CD4-positive, alpha-beta memory T cell (primary cell): ENCODE measurements at regions of chr1 and their contacts with region 1.

Region 1: GRCh38 chr1:101309334-101310311 is 72.8 kb downstream of the S1PR1 start:
- DNase-seq: peak; percentile 86 to 92 (median 89)
- H3K4me3 ChIP-seq: peak overlapping the region; percentile 9 to 55
- H3K4me3 Mint-ChIP-seq: peak overlapping the region; percentile 80 to 88 (median 86)
- H3K27ac ChIP-seq: peak overlapping the region; percentile 79
- H3K27ac Mint-ChIP-seq: peak overlapping the region; percentile 97 to 99 (median 98)
- H3K4me1 ChIP-seq: peaks cover 56% of the 10 kb centered on the region
- H3K4me1 Mint-ChIP-seq: peaks cover 50 to 78% (median 63%) of the 10 kb centered on the region in 4 donors
- H3K27me3 ChIP-seq: no peaks in the 10 kb centered on the region
- H3K27me3 Mint-ChIP-seq: no peaks in the 10 kb centered on the region

Region 2: GRCh38 chr1:100895540-100896483 is 413.8 kb before region 1 on chr1 and contains the start of gene SLC30A7:
- CTCF ChIA-PET with region 1: interaction called, 10 read pairs
- POLR2A ChIA-PET with region 1: interaction called, 14 read pairs
- intact Hi-C with region 1: no loop called
- DNase-seq: peak; percentile 93 to 98 (median 95)
- H3K4me3 ChIP-seq: peak within 1 kb of the TSS; percentile 96 to 98
- H3K4me3 Mint-ChIP-seq: peak within 1 kb of the TSS; percentile 94 to 100 (median 100)
- H3K27ac ChIP-seq: peak within 1 kb of the TSS; percentile 100
- H3K27ac Mint-ChIP-seq: peak within 1 kb of the TSS; percentile 99 to 100 (median 100)
- H3K4me1 ChIP-seq: peaks cover 44% of the 10 kb centered on the region
- H3K4me1 Mint-ChIP-seq: peaks cover 28 to 60% (median 39%) of the 10 kb centered on the region in 4 donors
- H3K27me3 ChIP-seq: no peaks in the 10 kb centered on the region
- H3K27me3 Mint-ChIP-seq: no peaks in the 10 kb centered on the region
- total RNA-seq, gene SLC30A7: 54.9 TPM

Region 3: GRCh38 chr1:100928128-100928527 is 381.5 kb before region 1 on chr1:
- CTCF ChIA-PET with region 1: interaction called, 10 read pairs
- POLR2A ChIA-PET with region 1: interaction called, 19 read pairs
- intact Hi-C with region 1: no loop called
- DNase-seq: no peak
- H3K4me3 ChIP-seq: peak overlapping the region in 1 of 2 donors; percentile 39
- H3K4me3 Mint-ChIP-seq: no peak overlapping the region
- H3K27ac ChIP-seq: peak overlapping the region; percentile 50
- H3K27ac Mint-ChIP-seq: no peak overlapping the region
- H3K4me1 ChIP-seq: peaks cover 95% of the 10 kb centered on the region
- H3K4me1 Mint-ChIP-seq: peaks cover 38 to 64% (median 49%) of the 10 kb centered on the region in 4 donors
- H3K27me3 ChIP-seq: no peaks in the 10 kb centered on the region
- H3K27me3 Mint-ChIP-seq: no peaks in the 10 kb centered on the region

Region 4: DNA sequence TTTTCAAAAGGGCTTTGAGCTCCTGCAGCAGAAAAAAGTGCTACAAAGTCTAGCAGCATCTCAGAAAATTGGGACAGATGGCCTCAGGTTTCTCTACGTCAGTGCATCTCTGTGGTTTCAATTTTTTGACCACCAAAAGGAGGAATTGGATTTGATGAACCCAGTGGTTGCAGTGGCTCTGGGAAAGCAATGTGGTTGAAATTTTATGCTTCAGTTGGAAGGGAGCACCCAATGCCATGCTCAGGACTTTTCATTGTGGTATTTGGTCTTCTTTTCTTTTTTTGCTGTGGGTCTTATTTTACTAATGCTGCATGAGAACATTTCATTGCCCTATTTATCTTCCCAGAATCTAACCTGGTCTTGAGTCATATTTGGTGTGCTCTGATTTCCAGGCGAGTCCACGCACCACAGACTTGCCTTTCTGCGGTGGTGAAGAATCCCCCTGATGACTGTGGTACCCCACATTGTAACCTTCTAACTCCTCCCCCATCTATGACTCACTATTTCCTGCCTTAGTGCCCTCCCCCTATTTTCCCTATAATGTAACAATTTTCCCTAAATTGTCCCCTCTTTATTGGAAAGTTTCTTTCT is 16.1 kb before region 1 on chr1:
- CTCF ChIA-PET with region 1: interaction called, 180 read pairs
- POLR2A ChIA-PET with region 1: interaction called, 45 read pairs
- intact Hi-C with region 1: loop called (anchors 1 kb)
- DNase-seq: peak in 2 of 5 donors; percentile 32 to 80
- H3K4me3 ChIP-seq: no peak overlapping the region
- H3K4me3 Mint-ChIP-seq: peak overlapping the region in 6 of 8 donors; percentile 19 to 75 (median 56)
- H3K27ac ChIP-seq: no peak overlapping the region
- H3K27ac Mint-ChIP-seq: peak overlapping the region; percentile 26 to 91 (median 84)
- H3K4me1 ChIP-seq: peaks cover 77% of the 10 kb centered on the region
- H3K4me1 Mint-ChIP-seq: peaks cover 47 to 88% (median 65%) of the 10 kb centered on the region in 4 donors
- H3K27me3 ChIP-seq: no peaks in the 10 kb centered on the region
- H3K27me3 Mint-ChIP-seq: no peaks in the 10 kb centered on the region

Region 5: DNA sequence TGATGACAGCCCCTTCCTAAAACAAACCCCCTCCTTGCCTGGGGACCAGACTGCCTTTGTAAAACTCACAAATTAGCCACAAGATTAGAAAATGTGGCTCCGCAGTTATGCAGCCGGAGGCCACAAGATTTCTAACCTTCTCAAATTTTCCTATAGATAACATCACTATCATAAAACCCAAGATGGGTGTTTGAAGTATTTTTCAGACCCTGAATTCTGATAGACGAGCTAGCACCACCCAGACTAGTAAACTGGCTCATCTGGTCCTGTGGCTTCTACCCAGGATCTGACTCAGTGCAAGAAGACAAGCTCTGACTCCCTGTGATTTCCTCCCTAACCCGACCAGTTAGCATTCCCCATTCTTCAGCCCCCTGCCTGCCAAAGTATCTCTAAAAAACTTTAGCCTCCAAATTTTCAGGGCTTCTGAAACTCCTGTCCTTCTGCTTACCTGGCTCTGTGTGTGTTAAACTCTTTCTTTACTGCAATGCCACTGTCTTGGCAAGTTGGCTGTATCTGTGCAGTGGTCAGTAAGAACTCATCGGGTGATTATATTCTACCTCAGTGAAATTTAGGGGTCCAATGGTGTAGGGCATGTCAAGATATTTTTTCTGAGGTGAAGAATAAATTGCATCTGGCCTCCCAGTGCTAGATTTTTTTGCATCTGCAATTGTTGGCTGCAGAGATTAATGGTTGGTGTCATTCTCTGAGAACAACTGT is 29.2 kb after region 1 on chr1:
- CTCF ChIA-PET with region 1: interaction called, 8 read pairs
- POLR2A ChIA-PET with region 1: interaction called, 12 read pairs
- intact Hi-C with region 1: no loop called
- DNase-seq: peak in 2 of 5 donors; percentile 9 to 50
- H3K4me3 ChIP-seq: no peak overlapping the region
- H3K4me3 Mint-ChIP-seq: peak overlapping the region in 1 of 8 donors; percentile 44
- H3K27ac ChIP-seq: no peak overlapping the region
- H3K27ac Mint-ChIP-seq: peak overlapping the region in 3 of 7 donors; percentile 5 to 78 (median 68)
- H3K4me1 ChIP-seq: no peaks in the 10 kb centered on the region
- H3K4me1 Mint-ChIP-seq: peaks cover 0 to 13% (median 6%) of the 10 kb centered on the region in 4 donors
- H3K27me3 ChIP-seq: no peaks in the 10 kb centered on the region
- H3K27me3 Mint-ChIP-seq: no peaks in the 10 kb centered on the region

Region 6: DNA sequence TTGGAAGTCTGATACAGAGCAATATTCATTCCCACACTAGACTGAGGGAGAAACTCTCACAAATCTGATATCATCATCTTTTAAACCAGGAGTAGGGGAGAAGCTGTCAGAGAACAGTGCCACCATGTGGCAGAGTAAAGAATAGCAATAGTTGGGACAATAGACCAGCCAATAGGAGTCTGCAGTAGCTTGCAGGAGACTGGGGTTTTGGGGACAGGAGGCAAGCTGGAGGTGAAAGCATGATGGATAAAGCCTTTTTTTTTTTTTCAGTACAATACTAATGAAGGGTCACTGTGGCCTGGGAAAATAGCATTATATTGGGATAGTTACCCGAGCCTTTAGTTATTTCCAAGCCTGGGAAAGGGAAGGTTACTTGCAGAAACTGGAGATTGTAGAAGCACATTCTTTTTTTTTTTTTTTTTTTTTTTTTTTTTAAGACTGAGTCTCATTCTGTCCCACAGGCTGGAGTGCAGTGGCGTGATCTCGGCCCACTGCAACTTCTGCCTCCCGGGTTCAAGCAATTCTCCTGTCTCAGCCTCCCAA is 47.9 kb after region 1 on chr1:
- CTCF ChIA-PET with region 1: interaction called, 262 read pairs
- POLR2A ChIA-PET with region 1: interaction called, 75 read pairs
- intact Hi-C with region 1: loop called (anchors 1 kb)
- DNase-seq: peak; percentile 78 to 87 (median 83)
- H3K4me3 ChIP-seq: no peak overlapping the region
- H3K4me3 Mint-ChIP-seq: peak overlapping the region in 4 of 8 donors; percentile 4 to 65 (median 55)
- H3K27ac ChIP-seq: no peak overlapping the region
- H3K27ac Mint-ChIP-seq: peak overlapping the region in 5 of 7 donors; percentile 67 to 96 (median 88)
- H3K4me1 ChIP-seq: peaks cover 13% of the 10 kb centered on the region
- H3K4me1 Mint-ChIP-seq: peaks cover 7 to 10% (median 10%) of the 10 kb centered on the region in 4 donors
- H3K27me3 ChIP-seq: no peaks in the 10 kb centered on the region
- H3K27me3 Mint-ChIP-seq: no peaks in the 10 kb centered on the region

Region 7: GRCh38 chr1:101428544-101428943 is 118.9 kb after region 1 on chr1:
- CTCF ChIA-PET with region 1: no interaction called
- POLR2A ChIA-PET with region 1: no interaction called
- intact Hi-C with region 1: no loop called
- DNase-seq: no peak
- H3K4me3 ChIP-seq: no peak overlapping the region
- H3K4me3 Mint-ChIP-seq: no peak overlapping the region
- H3K27ac ChIP-seq: no peak overlapping the region
- H3K27ac Mint-ChIP-seq: no peak overlapping the region
- H3K4me1 ChIP-seq: no peaks in the 10 kb centered on the region
- H3K4me1 Mint-ChIP-seq: no peaks in the 10 kb centered on the region
- H3K27me3 ChIP-seq: no peaks in the 10 kb centered on the region
- H3K27me3 Mint-ChIP-seq: peaks cover 3 to 4% of the 10 kb centered on the region in 2 donors

Region 8: DNA sequence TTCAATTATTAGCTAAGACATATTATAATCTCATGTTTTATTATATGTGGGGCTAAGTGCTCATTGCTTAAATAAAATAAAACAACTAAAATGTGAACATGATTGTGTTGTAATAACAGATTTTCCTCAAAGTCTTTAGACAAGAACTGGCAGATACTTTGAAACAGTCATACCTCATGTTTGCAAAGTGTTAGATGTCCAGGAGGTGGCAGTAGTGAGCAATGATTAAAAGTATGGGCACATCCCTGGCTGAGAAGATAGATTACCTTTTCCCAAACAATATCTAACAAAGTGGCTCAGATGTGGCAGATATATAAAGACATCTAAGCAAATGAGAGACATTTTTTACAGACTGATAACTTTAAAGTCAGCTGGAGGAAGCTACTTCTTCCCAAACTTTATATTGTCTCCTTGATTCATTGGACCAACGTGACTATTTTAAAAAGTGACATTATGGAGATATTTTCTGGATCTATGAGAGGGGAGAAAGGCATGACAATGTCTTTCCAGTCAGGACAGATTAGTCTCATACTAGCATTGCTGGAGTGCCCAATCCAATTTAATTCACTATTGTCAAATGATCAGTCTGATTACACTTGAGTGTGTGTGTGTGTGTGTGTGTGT is 197.0 kb after region 1 on chr1:
- CTCF ChIA-PET with region 1: interaction called, 10 read pairs
- POLR2A ChIA-PET with region 1: interaction called, 3 read pairs
- intact Hi-C with region 1: loop called (anchors 1 kb)
- DNase-seq: peak; percentile 25 to 48 (median 37)
- H3K4me3 ChIP-seq: no peak overlapping the region
- H3K4me3 Mint-ChIP-seq: no peak overlapping the region
- H3K27ac ChIP-seq: no peak overlapping the region
- H3K27ac Mint-ChIP-seq: no peak overlapping the region
- H3K4me1 ChIP-seq: no peaks in the 10 kb centered on the region
- H3K4me1 Mint-ChIP-seq: peaks cover 0 to 2% (median 0%) of the 10 kb centered on the region in 4 donors
- H3K27me3 ChIP-seq: no peaks in the 10 kb centered on the region
- H3K27me3 Mint-ChIP-seq: no peaks in the 10 kb centered on the region